ENCODE measurements at regions of chr2 and their contacts with region 1.

Region 1: DNA sequence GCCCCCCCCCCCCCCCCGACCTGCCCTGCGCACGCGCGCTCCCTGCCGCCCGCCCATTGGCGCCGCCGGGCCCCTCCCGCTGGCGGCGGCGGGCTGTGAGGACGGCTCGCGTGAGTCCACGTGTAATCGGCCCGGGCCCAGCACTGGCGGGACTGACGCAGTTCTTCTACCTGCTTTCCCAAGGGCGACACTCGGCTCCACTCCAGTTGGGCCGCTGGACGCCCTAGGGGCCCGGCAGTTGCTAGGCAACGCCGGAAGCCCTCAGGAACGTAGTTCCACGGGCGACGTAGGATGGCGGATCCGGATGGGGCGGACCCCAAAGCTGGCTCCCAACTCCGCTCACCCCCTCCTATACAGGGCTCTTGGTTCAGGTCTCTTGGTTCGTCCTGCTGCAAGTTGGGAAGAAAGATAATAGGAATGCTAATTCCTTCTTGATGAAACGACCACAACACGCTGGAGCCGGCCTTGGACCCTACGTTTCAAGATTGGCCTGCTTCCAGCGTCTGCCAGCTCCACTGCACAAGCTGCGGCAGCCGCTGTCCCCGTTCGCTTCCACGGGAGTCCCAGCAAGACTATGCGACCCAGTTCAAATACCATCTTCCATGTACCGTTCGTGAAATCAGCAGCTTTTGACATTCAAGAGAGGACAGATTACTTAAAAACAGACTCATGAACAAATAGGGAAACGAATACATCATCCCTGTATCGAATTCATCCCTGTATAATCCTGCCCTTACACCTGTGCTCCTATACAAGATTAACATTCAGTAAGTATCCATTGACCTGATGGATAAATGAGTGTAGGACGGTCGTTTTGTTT is 415 bp upstream of the MCFD2 start:
- DNase-seq: peak; percentile 84 to 92
- ATAC-seq: peak; percentile 89

Region 2: GRCh38 chr2:46679761-46680160 is 236.3 kb before region 1 on chr2:
- intact Hi-C with region 1: no loop called
- DNase-seq: no peak
- ATAC-seq: no peak

Region 3: DNA sequence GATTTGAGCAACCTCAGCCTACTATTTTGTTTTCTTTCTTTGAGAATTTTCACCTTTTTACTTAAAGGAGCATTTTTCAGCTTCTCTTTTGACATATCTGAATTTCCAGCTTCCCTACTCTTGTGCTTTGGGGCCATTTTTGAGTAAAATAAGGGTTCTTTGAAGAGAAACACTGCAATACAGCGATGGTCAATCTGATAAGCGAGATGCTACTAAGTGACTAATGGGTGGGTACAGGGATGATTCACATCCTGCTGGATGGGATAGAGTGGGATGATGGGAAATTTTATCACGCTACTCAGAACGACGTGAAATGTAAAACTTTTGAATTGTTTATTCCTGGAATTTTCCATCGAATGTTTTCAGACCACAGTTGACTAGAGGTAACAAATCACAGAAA is 225.2 kb before region 1 on chr2:
- intact Hi-C with region 1: no loop called
- DNase-seq: no peak
- ATAC-seq: no peak

Region 4: GRCh38 chr2:47323009-47323821 is 407.2 kb after region 1 on chr2:
- intact Hi-C with region 1: loop called in 1 of 2 experiments (anchors 10 kb)
- DNase-seq: peak; percentile 64 to 83
- ATAC-seq: peak; percentile 88

Measured in left colon (tissue), 2 donors.